ENCODE measurements at regions of chr13 and their contacts with region 1.

Region 1: GRCh38 chr13:59677966-59678814 is 485.5 kb downstream of the DIAPH3 start:
- DNase-seq: no peak
- ATAC-seq: peak; percentile 73
- H3K4me3 Mint-ChIP-seq: no peak overlapping the region
- H3K27ac Mint-ChIP-seq: no peak overlapping the region
- H3K4me1 Mint-ChIP-seq: peaks cover 2% of the 10 kb centered on the region
- H3K27me3 Mint-ChIP-seq: no peaks in the 10 kb centered on the region

Region 2: GRCh38 chr13:59391696-59392095 is 286.5 kb before region 1 on chr13:
- CTCF ChIA-PET with region 1: interaction called, 16 read pairs
- POLR2A ChIA-PET with region 1: no interaction called
- intact Hi-C with region 1: loop called (anchors 1 kb)
- DNase-seq: peak; percentile 68
- ATAC-seq: peak; percentile 96
- H3K4me3 Mint-ChIP-seq: no peak overlapping the region
- H3K27ac Mint-ChIP-seq: no peak overlapping the region
- H3K4me1 Mint-ChIP-seq: no peaks in the 10 kb centered on the region
- H3K27me3 Mint-ChIP-seq: peaks cover 2% of the 10 kb centered on the region

Region 3: DNA sequence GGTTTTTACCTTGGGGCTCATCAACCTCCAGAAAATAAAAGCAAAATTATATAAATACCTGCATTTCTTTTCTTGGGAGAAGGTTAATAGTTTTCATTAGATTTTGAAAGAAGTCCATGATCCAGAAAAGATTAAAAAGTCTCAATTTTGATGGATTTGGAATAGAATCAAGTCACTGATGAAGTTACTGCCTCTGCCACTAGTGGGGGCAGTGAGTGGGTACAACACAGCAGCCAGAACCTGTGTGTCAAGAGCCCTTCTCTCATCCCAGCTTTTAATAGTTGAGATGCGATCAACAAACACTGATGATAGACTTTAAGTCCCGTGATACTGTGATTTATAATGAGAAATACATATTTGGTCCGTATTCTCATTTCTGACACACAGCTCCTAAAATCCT is 201.2 kb before region 1 on chr13:
- CTCF ChIA-PET with region 1: no interaction called
- POLR2A ChIA-PET with region 1: no interaction called
- intact Hi-C with region 1: loop called in 1 of 2 experiments (anchors 5 kb)
- DNase-seq: peak; percentile 11
- ATAC-seq: no peak
- H3K4me3 Mint-ChIP-seq: no peak overlapping the region
- H3K27ac Mint-ChIP-seq: no peak overlapping the region
- H3K4me1 Mint-ChIP-seq: no peaks in the 10 kb centered on the region
- H3K27me3 Mint-ChIP-seq: no peaks in the 10 kb centered on the region

Region 4: DNA sequence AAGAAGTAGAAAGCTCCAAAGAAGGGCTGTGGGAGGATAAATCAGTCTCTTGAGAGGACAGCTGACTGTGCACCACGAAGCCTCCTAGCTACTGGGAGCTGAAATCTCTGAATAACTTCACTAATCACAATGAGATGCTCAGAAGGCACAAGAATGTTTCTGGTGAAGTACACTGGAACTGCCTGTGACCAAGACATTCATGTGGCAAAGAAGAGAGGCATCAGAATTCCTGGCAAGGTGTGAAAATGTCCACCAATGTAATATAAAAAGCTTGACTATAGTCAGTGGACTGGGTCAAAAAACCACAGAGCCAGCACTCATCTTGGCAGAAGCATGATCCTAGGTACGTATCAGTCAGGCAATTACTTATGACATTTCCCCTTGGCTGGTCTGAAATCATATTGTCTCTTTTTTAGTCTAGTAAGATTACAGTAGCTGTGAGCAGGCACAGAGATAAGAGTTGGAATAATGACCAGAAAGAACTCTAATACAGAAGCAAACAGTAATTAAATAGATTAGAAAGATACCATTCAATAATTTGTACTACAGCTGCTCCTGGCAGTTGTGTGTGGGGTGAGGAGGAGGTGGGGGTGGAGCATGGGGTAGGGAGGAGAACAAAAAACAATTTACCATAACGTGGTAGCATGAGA is 50.8 kb after region 1 on chr13:
- CTCF ChIA-PET with region 1: no interaction called
- POLR2A ChIA-PET with region 1: no interaction called
- intact Hi-C with region 1: no loop called
- DNase-seq: no peak
- ATAC-seq: no peak
- H3K4me3 Mint-ChIP-seq: no peak overlapping the region
- H3K27ac Mint-ChIP-seq: no peak overlapping the region
- H3K4me1 Mint-ChIP-seq: no peaks in the 10 kb centered on the region
- H3K27me3 Mint-ChIP-seq: no peaks in the 10 kb centered on the region

Region 5: DNA sequence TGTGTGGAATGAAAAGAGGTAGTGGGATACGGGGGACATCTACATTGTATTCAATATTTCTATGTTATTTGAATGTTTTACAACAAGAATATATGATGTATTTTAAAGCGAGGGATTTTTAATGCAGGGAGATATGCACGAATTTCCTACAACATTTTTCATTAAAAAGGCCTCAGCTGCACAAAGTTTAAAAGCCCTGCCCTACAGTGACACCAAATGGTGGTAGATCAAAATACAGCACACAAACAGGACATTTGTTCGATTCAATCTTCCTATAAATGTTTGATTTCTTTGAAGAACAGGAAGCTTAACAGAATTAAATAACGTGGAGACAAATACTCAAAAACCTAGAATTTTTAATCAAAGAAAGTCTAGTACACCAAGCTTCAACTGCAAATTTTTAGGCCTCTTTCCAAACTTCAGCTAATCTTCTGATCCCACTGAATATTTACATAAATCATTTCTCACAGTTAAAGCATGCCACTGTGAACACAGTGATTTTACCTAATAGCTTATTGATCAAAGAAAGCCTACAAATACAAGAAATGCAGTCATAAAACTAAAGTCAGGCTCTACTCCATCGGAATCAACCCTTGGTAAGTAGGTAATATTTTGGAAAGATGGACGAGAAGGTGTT is 228.3 kb after region 1 on chr13:
- CTCF ChIA-PET with region 1: no interaction called
- POLR2A ChIA-PET with region 1: no interaction called
- intact Hi-C with region 1: loop called in 1 of 2 experiments (anchors 5 kb)
- DNase-seq: no peak
- ATAC-seq: no peak
- H3K4me3 Mint-ChIP-seq: no peak overlapping the region
- H3K27ac Mint-ChIP-seq: no peak overlapping the region
- H3K4me1 Mint-ChIP-seq: no peaks in the 10 kb centered on the region
- H3K27me3 Mint-ChIP-seq: no peaks in the 10 kb centered on the region

Region 6: GRCh38 chr13:60335531-60335930 is 657.3 kb after region 1 on chr13:
- CTCF ChIA-PET with region 1: interaction called, 3 read pairs
- POLR2A ChIA-PET with region 1: no interaction called
- intact Hi-C with region 1: loop called (anchors 2 to 5 kb)
- DNase-seq: no peak
- ATAC-seq: no peak
- H3K4me3 Mint-ChIP-seq: no peak overlapping the region
- H3K27ac Mint-ChIP-seq: no peak overlapping the region
- H3K4me1 Mint-ChIP-seq: no peaks in the 10 kb centered on the region
- H3K27me3 Mint-ChIP-seq: peaks cover 4% of the 10 kb centered on the region

Region 7: GRCh38 chr13:60431108-60431700 is 753.0 kb after region 1 on chr13:
- CTCF ChIA-PET with region 1: interaction called, 16 read pairs
- POLR2A ChIA-PET with region 1: no interaction called
- intact Hi-C with region 1: loop called (anchors 1 to 2 kb)
- DNase-seq: no peak
- ATAC-seq: peak; percentile 80
- H3K4me3 Mint-ChIP-seq: no peak overlapping the region
- H3K27ac Mint-ChIP-seq: no peak overlapping the region
- H3K4me1 Mint-ChIP-seq: peaks cover 25% of the 10 kb centered on the region
- H3K27me3 Mint-ChIP-seq: no peaks in the 10 kb centered on the region